Mammary epithelial cell (primary cell): ENCODE measurements at regions of chr3 and their contacts with region 1.

Region 1: DNA sequence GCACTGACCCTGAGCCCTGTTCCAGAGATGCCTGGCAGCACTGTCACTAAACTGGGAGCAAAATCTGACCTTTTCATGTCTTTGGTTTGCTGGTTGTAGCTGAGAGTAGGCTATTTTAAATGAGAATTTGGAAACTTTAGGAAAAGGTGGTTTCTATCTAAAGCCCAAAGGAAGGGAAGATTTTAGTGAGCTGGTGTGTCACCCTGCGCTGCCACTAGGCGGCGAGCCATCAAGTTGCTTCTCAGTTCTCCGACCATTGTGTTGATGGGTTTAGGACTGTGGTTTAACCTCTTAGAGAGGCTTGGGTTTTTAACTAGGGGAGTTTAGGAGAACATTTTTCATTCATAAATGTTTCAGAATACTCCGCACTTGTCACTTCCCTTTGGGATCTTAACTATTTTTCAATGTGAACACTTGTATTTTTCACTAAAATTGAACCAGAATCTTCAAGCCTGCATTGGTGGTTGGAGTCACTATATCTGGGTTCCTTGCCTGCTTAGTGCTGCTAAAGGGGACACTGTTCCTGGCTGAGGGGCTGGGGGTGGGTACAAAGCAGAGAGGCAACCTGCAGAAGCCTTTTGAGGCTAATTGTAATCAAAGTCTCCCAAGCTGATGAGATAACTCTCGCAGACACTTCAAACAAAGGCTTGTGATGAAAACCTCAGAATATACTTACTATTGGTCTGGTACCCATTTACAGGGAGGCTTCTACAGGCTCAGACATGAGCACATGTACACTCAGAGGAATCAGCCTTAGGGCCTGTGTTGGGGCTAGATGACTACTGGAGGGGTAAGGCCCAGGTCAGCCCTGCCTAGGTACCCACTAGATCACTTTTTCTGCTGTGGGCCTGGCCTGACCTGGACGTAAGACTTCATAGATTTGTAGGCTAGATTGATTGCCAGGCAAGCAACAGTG is 16.8 kb downstream of the EXOSC7 start:
- DNase-seq: peak; percentile 96
- H3K4me3 ChIP-seq: no peak overlapping the region
- H3K27ac ChIP-seq: peak overlapping the region; percentile 92
- H3K4me1 ChIP-seq: peaks cover 54% of the 10 kb centered on the region
- H3K27me3 ChIP-seq: no peaks in the 10 kb centered on the region
- CTCF ChIP-seq: peak; percentile 79 to 93

Region 2: GRCh38 chr3:44942202-44942921 is 50.5 kb before region 1 on chr3:
- CTCF ChIA-PET with region 1: no interaction called
- dilution Hi-C with region 1: no loop called
- in situ Hi-C with region 1: no loop called
- intact Hi-C with region 1: loop called (anchors 5 kb)
- DNase-seq: peak; percentile 71
- H3K4me3 ChIP-seq: no peak overlapping the region
- H3K27ac ChIP-seq: peak overlapping the region; percentile 36
- H3K4me1 ChIP-seq: peaks cover 8% of the 10 kb centered on the region
- H3K27me3 ChIP-seq: no peaks in the 10 kb centered on the region
- CTCF ChIP-seq: no peak

Region 3: DNA sequence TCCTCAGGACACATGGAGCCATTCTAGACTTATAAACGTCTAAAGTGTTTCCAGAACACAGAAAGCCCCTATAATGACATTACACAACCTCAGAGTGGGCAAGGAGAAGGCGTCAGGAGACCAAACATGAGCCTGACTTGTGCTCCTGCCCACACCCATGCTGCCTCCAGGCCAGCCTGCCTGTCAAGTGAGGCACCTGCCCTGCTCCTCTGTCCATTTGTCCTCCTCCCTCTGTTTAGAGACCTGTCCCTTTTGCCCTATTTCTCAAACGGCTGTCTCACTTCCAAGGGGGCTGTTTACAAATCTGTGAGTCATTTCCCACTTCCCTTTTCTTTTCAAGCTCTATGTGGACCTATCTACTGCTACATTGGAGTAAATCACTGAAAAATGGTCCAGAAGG is 37.9 kb before region 1 on chr3:
- CTCF ChIA-PET with region 1: interaction called, 10 read pairs
- dilution Hi-C with region 1: no loop called
- in situ Hi-C with region 1: no loop called
- intact Hi-C with region 1: no loop called
- DNase-seq: no peak
- H3K4me3 ChIP-seq: no peak overlapping the region
- H3K27ac ChIP-seq: no peak overlapping the region
- H3K4me1 ChIP-seq: peaks cover 9% of the 10 kb centered on the region
- H3K27me3 ChIP-seq: no peaks in the 10 kb centered on the region
- CTCF ChIP-seq: no peak

Region 4: DNA sequence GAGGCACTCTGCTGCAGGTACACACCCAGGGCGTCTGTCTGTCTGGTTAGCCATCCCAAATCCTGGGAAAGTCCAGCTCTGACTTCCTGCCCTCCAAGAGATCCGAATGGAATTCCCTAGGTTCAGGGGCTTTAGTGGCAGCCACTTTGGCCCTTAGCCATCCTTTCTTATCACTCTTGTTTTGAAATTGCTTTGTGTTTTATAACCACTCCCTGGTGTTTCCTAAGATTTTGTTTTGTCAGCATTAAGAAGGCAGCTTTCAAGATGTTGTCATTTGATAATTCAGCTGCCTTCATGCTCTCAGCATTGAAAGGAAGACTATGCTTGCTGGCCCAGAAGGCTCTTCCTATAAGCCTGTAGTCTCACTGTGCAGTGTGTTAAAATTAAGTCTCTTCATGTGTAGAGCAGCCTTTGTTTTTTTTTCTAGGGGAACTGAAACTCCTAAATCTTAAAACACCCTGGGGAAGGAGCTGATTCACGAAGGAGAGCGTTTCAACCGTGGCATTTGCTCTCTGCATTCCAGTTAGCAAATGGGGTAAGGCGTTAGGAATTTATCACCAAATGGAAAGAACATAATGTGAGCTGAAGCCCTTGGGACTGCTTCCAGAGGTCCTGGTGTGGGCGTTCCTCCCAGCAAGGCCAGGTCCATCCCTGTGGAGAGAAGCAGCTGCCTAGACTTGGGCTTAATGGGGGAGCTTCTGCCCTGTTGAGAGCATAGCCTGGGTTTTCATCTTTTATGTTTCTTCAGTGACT is 19.1 kb after region 1 on chr3:
- CTCF ChIA-PET with region 1: no interaction called
- dilution Hi-C with region 1: no loop called
- in situ Hi-C with region 1: no loop called
- intact Hi-C with region 1: loop called (anchors 1 kb)
- DNase-seq: peak; percentile 63
- H3K4me3 ChIP-seq: peak overlapping the region in 1 of 3 experiments; percentile 8
- H3K27ac ChIP-seq: peak overlapping the region; percentile 62
- H3K4me1 ChIP-seq: peaks cover 36% of the 10 kb centered on the region
- H3K27me3 ChIP-seq: no peaks in the 10 kb centered on the region
- CTCF ChIP-seq: no peak